ENCODE measurements at regions of chr11 and their contacts with region 1.

Region 1: DNA sequence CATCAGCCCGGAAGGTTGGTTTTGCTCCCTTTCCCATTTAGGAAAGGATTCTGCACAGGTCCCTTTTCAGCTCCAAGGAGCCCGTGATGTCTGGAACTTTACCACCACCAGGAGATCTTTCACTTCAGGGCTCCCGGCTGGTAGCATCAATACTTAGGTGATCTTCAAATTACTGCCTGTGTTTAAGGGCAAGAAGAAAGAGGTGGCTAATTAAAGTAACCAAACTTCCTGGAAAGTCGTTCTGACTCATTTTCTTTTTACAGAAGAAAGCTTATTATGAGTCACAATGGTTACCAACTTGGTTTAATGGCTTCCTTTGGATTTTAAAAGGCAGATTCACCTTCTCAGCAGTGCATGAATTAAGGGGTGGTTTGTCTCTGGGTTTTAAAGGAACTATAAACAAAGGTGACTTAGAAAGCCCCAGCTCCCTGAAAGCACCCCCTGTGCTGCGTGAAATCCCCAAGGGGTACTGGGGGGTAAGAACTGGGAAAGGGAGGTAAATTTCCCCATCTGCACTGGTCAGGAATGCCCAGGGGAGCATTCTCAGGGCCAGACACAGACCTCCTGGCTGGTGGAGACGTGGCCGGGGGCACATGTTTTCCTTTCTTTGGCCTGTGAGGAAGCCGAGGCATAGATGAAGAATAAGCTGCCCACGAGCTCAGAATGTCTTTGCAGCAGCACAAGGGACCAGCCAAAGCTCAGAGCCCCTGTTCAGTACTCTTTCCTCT is 8.8 kb downstream of the POU2F3 start:
- DNase-seq: no peak
- ATAC-seq: peak; percentile 88
- H3K4me3 Mint-ChIP-seq: no peak overlapping the region
- H3K27ac Mint-ChIP-seq: peak overlapping the region; percentile 44
- H3K4me1 Mint-ChIP-seq: peaks cover 29% of the 10 kb centered on the region
- H3K27me3 Mint-ChIP-seq: peaks cover 63% of the 10 kb centered on the region

Region 2: DNA sequence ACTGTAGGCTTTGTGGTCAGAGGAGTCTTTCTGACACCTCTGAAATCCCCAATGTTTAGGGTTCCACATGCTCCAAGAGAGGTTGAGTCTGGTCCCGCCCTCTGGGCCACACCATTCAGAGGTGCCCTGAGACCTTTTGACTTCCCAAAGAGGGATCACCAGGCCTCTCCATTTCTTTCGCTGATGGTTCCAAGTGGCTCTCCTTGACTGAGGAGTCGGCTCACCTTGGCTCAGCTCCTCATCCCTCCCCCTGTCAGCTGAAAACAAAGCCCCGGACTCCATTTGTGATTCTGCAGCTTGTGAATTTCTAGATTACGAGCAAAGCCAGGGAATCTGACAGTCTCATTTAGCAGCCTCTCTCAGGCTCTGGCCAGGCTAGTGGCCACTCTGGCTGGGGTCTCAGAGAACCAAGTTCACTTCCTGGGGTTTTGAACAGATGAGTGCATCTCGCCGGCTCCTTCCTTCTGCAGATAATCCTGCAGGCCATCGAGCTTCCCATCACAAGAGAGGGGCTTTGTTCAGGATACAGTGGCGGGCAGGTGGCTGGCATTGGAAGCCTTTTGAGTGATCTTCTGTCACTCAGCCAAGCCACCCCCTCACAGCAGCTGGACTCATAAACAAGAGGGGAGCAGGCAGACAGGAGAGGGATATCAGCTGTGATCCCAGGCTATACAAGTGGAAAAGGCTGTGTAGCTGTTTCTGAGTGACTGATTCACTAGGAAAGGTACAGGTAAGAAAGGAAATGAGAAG is 213.7 kb before region 1 on chr11:
- CTCF ChIA-PET with region 1: no interaction called
- POLR2A ChIA-PET with region 1: no interaction called
- intact Hi-C with region 1: no loop called
- DNase-seq: no peak
- ATAC-seq: no peak
- H3K4me3 Mint-ChIP-seq: no peak overlapping the region
- H3K27ac Mint-ChIP-seq: no peak overlapping the region
- H3K4me1 Mint-ChIP-seq: no peaks in the 10 kb centered on the region
- H3K27me3 Mint-ChIP-seq: no peaks in the 10 kb centered on the region

Region 3: DNA sequence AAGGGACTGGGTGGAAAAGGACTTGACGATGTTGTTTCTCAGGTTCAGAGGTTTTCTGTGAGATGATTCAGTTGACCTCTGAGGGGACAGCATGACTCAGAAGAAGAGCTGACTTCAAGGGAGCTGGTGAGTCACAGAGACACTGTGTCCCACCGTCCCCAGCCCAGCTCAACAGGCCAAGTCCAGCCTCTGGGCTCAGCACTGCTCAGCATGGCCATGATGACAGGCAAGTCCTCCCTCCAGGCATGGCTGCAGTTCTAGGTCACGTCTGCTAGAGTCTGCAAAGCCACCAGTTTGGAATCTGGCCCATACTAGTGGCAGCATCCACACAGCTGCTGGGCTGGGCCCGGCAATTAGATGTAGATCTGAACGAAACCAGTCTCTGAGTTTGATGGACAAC is 123.7 kb before region 1 on chr11:
- CTCF ChIA-PET with region 1: no interaction called
- POLR2A ChIA-PET with region 1: no interaction called
- intact Hi-C with region 1: no loop called
- DNase-seq: no peak
- ATAC-seq: peak; percentile 57
- H3K4me3 Mint-ChIP-seq: no peak overlapping the region
- H3K27ac Mint-ChIP-seq: no peak overlapping the region
- H3K4me1 Mint-ChIP-seq: no peaks in the 10 kb centered on the region
- H3K27me3 Mint-ChIP-seq: no peaks in the 10 kb centered on the region

Region 4: GRCh38 chr11:120210626-120211521 is 37.8 kb before region 1 on chr11 and contains the start of gene OAF:
- CTCF ChIA-PET with region 1: no interaction called
- POLR2A ChIA-PET with region 1: no interaction called
- intact Hi-C with region 1: loop called in 1 of 2 experiments (anchors 1 kb)
- DNase-seq: peak; percentile 70
- ATAC-seq: peak; percentile 93
- H3K4me3 Mint-ChIP-seq: peak within 1 kb of the TSS; percentile 74
- H3K27ac Mint-ChIP-seq: peak within 1 kb of the TSS; percentile 34
- H3K4me1 Mint-ChIP-seq: peaks cover 11% of the 10 kb centered on the region
- H3K27me3 Mint-ChIP-seq: peaks cover 25% of the 10 kb centered on the region
- total RNA-seq, gene OAF: 1.4 to 1.6 TPM

Region 5: DNA sequence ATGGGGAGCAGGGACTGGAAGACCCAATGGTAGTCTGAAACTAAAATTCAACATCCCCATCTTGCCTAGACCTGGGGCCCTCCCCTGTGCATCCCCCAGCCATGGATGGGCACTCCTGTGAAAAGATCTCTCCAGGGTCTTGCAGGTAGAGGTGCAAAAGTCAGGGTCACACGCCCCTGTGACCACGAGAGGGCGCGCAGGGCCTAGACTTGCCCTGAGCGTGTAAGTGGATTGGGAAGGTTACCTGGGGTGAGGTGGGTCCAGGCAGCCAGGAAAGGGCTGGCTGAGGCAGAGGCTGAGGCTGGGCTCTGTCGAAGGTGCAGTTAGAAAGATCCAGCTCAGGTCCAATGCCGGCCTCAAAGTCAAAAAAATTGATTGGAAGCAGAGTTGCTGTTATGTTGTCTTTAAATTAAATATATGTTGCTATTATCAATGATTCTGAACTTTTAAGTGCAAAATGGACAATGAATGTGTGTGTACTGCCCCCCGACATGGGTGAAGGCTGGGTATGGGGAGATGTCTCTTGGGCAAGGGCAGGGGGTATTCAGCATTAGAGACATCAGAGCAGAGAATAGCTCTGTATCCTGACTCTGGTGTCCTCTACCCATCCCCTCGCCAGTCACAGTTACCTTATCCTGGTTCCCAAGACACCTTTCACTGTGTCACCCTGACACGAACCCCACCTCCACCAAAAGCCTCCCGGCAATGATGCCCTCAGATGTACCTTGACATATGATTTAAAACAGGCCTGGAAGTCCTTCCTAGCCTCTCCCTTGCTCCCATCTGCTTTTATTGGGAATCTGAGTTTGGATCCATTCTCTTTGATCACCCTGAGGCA is 13.5 kb before region 1 on chr11:
- CTCF ChIA-PET with region 1: interaction called, 29 read pairs
- POLR2A ChIA-PET with region 1: interaction called, 3 read pairs
- intact Hi-C with region 1: no loop called
- DNase-seq: peak; percentile 84
- ATAC-seq: peak; percentile 88
- H3K4me3 Mint-ChIP-seq: no peak overlapping the region
- H3K27ac Mint-ChIP-seq: no peak overlapping the region
- H3K4me1 Mint-ChIP-seq: no peaks in the 10 kb centered on the region
- H3K27me3 Mint-ChIP-seq: peaks cover 40% of the 10 kb centered on the region

Region 6: DNA sequence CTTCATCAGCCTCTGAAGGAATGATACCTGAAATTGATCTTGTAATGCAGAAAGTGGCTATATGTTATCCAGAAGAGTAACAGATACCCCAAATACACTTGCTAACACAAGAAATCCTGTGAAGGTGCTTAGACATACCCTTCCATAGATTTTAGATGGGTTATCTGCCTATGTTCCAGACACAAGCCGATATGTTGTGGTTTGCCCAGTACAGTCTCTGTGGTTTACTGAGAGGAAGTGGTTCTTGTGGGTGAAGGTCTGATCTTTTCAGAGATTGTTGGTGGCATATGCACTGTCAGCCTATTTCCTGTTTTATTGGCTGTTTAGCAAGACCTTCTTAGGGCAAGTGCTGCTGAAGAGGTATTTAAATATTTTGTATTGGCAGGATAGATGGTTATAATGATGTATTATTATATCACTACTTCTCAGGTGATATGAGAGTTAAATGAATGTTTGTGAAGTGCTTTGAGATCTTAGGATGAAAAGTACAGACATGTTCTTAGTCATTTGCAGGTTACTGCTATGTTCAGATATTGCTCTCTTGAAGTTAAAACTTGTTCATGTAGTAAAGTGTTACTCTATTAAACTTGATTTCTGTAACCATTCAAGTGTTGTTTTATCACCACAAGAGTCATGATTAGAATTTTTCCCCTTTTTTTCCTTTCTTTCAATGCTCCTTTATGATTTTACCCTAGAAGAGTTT is 95.7 kb after region 1 on chr11:
- CTCF ChIA-PET with region 1: no interaction called
- POLR2A ChIA-PET with region 1: no interaction called
- intact Hi-C with region 1: loop called in 1 of 2 experiments (anchors 1 kb)
- DNase-seq: peak; percentile 58
- ATAC-seq: peak; percentile 75
- H3K4me3 Mint-ChIP-seq: no peak overlapping the region
- H3K27ac Mint-ChIP-seq: no peak overlapping the region
- H3K4me1 Mint-ChIP-seq: peaks cover 39% of the 10 kb centered on the region
- H3K27me3 Mint-ChIP-seq: peaks cover 50% of the 10 kb centered on the region

Region 7: GRCh38 chr11:120735035-120735434 is 486.3 kb after region 1 on chr11:
- CTCF ChIA-PET with region 1: no interaction called
- POLR2A ChIA-PET with region 1: no interaction called
- intact Hi-C with region 1: no loop called
- DNase-seq: no peak
- ATAC-seq: no peak
- H3K4me3 Mint-ChIP-seq: no peak overlapping the region
- H3K27ac Mint-ChIP-seq: no peak overlapping the region
- H3K4me1 Mint-ChIP-seq: no peaks in the 10 kb centered on the region
- H3K27me3 Mint-ChIP-seq: peaks cover 11% of the 10 kb centered on the region

Region 8: GRCh38 chr11:120835601-120836228 is 587.0 kb after region 1 on chr11:
- CTCF ChIA-PET with region 1: no interaction called
- POLR2A ChIA-PET with region 1: no interaction called
- intact Hi-C with region 1: loop called in 1 of 2 experiments (anchors 10 kb)
- DNase-seq: peak; percentile 80
- ATAC-seq: peak; percentile 94
- H3K4me3 Mint-ChIP-seq: no peak overlapping the region
- H3K27ac Mint-ChIP-seq: no peak overlapping the region
- H3K4me1 Mint-ChIP-seq: peaks cover 22% of the 10 kb centered on the region
- H3K27me3 Mint-ChIP-seq: peaks cover 20% of the 10 kb centered on the region

Measured in activated CD4-positive, alpha-beta T cell treated with anti-CD3 and anti-CD28 coated beads for 36 hours (primary cell).